Activated T-helper 1 cell treated with anti-CD3 and anti-CD28 coated beads, Interleukin-12 subunit alpha, Interleukin-12 subunit beta, Interleukin-2, Interleukin-4 antibody, amounts not matched to agents 30 ng/mL and 10 ng/mL and 1 ng/mL, durations not matched to agents 14 hours and 24 hours and 36 hours (primary cell): ENCODE measurements at regions of chr1 and their contacts with region 1.

Region 1: GRCh38 chr1:43171876-43172526 is at the starts of genes CFAP57 and EBNA1BP2:
- DNase-seq: peak; percentile 89
- H3K4me3 Mint-ChIP-seq: peak within 1 kb of the TSS; percentile 96
- H3K27ac Mint-ChIP-seq: peak within 1 kb of the TSS; percentile 86
- H3K4me1 Mint-ChIP-seq: peaks cover 16% of the 10 kb centered on the region
- H3K27me3 Mint-ChIP-seq: peaks cover 20% of the 10 kb centered on the region
- total RNA-seq, gene CFAP57: not detected in 2 replicates
- total RNA-seq, gene EBNA1BP2: 126 and 132 TPM in 2 replicates

Region 2: DNA sequence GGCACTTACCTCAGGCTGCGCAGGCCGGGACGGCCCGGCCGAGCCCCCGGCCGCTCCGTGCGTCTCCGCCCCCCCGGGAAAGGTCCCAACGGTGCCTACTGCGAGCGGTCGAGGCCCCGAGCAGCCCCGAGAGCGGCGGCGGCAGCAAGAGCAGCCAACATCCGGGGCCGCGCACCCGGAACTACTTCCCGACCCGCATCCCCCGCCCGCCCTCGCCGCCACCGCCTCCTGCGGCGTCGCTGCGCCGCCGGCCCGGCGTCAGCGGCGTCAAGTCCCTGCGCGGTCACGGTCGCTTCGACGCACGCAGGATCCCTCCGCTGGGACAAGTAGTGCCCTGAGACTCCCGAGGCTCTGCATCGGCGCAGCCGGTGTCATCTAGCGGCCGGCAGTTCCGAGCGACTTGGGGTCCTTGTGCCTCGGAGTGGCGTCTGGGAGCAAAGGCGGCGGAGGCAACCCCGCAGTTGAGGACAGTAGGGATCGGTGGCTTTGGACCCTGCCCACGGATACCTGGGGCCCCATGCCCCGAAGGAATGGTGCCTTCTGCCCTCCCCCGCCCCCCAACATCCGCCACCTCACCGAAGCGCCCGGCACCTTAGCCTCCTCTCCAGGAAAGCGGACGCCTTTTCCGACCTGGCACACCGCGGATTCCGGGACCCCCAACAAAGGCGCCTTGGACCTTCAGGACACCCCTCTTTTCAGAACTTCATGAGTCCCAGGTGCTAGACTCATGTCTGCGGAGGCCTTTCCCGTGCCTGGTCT is 836.8 kb before region 1 on chr1 and contains the start of gene FOXJ3:
- intact Hi-C with region 1: loop called (anchors 10 kb)
- DNase-seq: peak; percentile 87
- H3K4me3 Mint-ChIP-seq: peak within 1 kb of the TSS; percentile 90
- H3K27ac Mint-ChIP-seq: peak within 1 kb of the TSS; percentile 91
- H3K4me1 Mint-ChIP-seq: peaks cover 47% of the 10 kb centered on the region
- H3K27me3 Mint-ChIP-seq: no peaks in the 10 kb centered on the region
- total RNA-seq, gene FOXJ3: 50.1 and 51.6 TPM in 2 replicates

Region 3: DNA sequence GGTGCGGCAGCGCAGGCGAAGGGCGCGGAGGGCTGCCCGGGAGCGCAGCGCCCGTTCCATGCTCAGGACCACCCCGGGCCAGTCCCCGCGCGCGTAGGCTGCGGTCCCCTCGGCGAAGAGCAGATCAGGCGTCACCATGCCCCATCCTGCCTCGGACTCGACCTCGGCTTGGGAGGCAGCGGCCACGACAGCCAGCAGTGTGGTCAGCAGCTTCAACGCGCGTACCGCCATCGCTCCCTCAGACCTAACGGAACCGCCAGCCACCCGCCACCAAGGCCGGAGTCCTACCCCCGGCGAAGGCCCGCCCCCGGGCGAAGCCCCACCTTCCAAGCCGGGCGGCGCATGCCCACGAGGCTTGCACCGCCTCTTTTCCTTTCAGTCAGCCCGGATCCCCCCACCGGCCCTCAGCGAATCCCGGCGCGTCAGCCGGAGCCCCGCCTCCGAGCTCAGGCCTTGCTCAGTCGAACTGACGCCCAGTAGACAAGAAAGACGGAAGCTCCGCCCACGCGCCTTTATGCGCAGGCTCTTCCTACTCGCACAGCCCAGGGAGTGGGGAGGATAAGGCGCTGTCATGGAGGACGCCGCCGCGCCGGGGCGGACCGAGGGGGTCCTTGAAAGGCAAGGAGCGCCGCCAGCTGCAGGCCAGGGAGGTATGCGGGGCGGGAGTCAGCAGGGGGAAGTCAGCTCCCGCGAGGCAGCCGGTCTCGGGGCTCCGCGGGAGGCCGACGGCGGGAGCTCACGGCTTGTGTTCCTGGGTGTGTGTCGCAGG is 405.1 kb before region 1 on chr1 and contains the starts of genes C1orf50 and P3H1:
- intact Hi-C with region 1: loop called (anchors 1 kb)
- DNase-seq: peak; percentile 100
- H3K4me3 Mint-ChIP-seq: no peak within 1 kb of the TSS
- H3K27ac Mint-ChIP-seq: peak within 1 kb of the TSS; percentile 93
- H3K4me1 Mint-ChIP-seq: peaks cover 21% of the 10 kb centered on the region
- H3K27me3 Mint-ChIP-seq: no peaks in the 10 kb centered on the region
- total RNA-seq, gene C1orf50: 6.4 and 7.6 TPM in 2 replicates
- total RNA-seq, gene P3H1: 44.9 and 51.4 TPM in 2 replicates

Region 4: DNA sequence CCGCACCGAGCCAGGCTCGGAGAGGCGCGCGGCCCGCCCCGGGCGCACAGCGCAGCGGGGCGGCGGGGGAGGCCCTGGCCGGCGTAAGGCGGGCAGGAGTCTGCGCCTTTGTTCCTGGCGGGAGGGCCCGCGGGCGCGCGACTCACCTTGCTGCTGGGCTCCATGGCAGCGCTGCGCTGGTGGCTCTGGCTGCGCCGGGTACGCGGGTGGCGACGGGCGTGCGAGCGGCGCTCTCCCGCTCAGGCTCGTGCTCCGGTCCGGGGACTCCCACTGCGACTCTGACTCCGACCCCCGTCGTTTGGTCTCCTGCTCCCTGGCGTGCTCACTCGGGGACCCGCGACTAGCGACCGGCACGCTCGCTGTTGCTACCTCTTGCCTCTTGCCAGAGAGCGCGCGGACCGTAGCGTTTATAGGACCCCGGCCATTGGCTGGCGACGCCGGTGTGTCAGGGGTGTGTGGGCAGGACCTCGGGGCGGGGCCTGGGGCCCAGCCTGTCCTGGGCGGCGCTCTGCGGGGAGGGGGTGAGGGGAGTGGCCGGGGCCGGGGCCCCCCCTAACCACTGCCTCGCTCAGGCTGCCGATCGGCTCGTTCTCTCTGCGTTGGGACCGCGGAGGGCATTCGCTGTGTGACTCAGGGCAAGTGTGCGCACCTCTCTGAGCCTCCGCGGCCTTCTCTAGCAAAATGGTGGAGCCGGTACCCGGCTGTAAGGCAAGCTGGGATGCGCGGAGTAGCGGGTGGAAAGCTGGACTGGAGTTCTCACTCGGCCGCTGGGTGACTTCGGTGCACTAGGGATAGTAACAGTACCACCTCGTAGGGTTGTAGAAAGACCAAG is 213.3 kb before region 1 on chr1 and contains the start of gene SLC2A1:
- intact Hi-C with region 1: loop called (anchors 1 kb)
- DNase-seq: peak; percentile 93
- H3K4me3 Mint-ChIP-seq: peak within 1 kb of the TSS; percentile 97
- H3K27ac Mint-ChIP-seq: peak within 1 kb of the TSS; percentile 100
- H3K4me1 Mint-ChIP-seq: peaks cover 51% of the 10 kb centered on the region
- H3K27me3 Mint-ChIP-seq: peaks cover 6% of the 10 kb centered on the region
- total RNA-seq, gene SLC2A1: 111 and 120 TPM in 2 replicates

Region 5: GRCh38 chr1:43152866-43153265 is 19.1 kb before region 1 on chr1:
- intact Hi-C with region 1: no loop called
- DNase-seq: no peak
- H3K4me3 Mint-ChIP-seq: no peak overlapping the region
- H3K27ac Mint-ChIP-seq: no peak overlapping the region
- H3K4me1 Mint-ChIP-seq: no peaks in the 10 kb centered on the region
- H3K27me3 Mint-ChIP-seq: peaks cover 15% of the 10 kb centered on the region

Region 6: DNA sequence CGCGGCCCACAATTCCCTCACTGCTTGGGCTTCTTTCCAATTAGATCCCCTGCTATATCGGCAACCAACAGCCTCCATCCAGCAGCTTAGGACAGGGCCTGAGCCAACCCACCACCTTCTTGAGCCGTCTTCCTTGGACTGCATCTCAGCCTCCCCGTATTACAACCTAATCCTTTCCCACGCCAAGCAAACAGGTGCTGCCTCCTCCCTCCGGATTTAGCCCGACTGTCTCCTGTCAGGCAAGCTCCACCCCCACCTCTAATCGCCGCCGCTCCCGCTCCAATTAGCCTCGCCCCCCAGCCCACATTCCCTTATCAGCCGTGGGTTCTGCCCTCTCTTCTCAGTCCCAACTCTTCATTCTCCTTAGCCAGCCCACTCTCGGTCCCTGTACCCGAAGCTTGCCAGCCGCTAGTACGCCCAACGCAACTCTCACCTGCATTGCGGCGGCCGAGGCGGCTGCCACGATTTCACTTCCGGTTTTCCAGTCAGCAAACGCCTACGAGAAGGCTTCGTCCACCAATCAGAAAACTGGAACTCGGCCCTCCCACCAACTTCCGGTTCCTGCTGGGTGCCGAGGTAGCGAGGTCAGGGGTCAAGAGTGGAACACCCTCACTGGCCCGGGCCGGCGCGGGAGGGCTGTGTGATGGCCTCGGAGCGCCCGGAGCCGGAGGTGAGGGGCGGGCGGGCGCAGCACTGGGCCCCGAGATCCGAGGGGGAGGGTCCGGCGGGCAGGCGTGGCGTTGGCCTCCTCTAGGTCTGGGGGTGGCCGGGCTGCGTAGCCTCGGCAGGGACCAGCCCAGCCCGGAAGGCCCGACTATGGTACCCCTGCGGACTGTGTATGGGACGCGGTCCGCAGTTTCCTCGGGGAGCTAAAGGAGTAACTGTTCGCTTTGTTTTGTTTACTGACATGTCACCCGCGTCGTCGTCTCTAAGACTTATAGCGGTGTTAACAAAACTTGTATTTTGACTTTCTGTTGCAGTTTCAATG is 217.6 kb after region 1 on chr1 and contains the starts of genes MED8 and SZT2:
- intact Hi-C with region 1: loop called (anchors 1 kb)
- DNase-seq: peak; percentile 93
- H3K4me3 Mint-ChIP-seq: peak within 1 kb of the TSS; percentile 99
- H3K27ac Mint-ChIP-seq: peak within 1 kb of the TSS; percentile 92
- H3K4me1 Mint-ChIP-seq: peaks cover 40% of the 10 kb centered on the region
- H3K27me3 Mint-ChIP-seq: no peaks in the 10 kb centered on the region
- total RNA-seq, gene MED8: 43.0 and 48.5 TPM in 2 replicates
- total RNA-seq, gene SZT2: 59.2 and 64.5 TPM in 2 replicates

Region 7: DNA sequence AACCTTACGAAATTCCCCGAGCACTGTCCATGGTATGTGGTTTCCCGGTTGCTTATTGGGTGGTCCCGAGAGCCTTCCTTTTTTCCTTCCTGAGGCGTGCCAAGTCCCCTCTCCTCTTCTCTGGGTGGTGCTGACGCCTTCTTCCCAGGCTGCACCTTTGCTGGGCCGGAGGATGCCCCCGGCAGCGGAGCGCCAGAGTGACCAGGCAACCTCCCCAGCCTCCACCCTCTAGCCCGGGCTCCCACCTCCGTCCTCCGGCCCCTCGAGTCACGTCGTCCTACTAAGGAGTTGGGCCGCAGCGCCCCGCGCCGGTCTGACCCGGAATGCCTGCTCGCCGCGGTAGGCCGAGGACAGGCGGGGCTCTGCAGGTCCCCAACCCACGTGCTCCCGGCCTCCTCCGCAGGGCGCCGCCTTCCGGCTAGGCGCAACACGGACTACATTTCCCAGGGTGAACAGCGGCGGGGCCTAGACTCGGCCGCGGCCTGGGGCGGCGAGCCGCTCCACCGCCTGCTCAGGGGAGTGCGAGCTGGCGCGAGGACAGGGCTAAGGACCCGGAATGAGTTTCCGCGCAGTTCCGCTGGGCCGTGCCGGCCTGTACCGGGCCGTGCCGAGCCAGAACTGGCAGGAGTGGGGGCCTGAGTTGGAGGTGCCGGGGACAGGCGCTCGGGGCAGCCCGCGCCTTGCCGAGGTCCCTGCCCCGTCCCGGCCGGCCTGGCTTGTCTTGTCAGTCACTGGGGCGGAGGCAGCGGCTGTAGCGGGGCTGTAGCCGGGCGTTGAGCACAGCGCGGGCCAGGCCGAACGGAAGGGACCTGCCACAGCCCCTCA is 774.4 kb after region 1 on chr1 and contains the start of gene IPO13:
- intact Hi-C with region 1: loop called (anchors 1 kb)
- DNase-seq: peak; percentile 96
- H3K4me3 Mint-ChIP-seq: peak within 1 kb of the TSS; percentile 97
- H3K27ac Mint-ChIP-seq: peak within 1 kb of the TSS; percentile 96
- H3K4me1 Mint-ChIP-seq: peaks cover 53% of the 10 kb centered on the region
- H3K27me3 Mint-ChIP-seq: no peaks in the 10 kb centered on the region
- total RNA-seq, gene IPO13: 28.6 and 33.9 TPM in 2 replicates